Activated B cell treated with CpG ODN at 0.5 μM for 24 hours (primary cell): ENCODE measurements at regions of chr16 and their contacts with region 1.

Region 1: DNA sequence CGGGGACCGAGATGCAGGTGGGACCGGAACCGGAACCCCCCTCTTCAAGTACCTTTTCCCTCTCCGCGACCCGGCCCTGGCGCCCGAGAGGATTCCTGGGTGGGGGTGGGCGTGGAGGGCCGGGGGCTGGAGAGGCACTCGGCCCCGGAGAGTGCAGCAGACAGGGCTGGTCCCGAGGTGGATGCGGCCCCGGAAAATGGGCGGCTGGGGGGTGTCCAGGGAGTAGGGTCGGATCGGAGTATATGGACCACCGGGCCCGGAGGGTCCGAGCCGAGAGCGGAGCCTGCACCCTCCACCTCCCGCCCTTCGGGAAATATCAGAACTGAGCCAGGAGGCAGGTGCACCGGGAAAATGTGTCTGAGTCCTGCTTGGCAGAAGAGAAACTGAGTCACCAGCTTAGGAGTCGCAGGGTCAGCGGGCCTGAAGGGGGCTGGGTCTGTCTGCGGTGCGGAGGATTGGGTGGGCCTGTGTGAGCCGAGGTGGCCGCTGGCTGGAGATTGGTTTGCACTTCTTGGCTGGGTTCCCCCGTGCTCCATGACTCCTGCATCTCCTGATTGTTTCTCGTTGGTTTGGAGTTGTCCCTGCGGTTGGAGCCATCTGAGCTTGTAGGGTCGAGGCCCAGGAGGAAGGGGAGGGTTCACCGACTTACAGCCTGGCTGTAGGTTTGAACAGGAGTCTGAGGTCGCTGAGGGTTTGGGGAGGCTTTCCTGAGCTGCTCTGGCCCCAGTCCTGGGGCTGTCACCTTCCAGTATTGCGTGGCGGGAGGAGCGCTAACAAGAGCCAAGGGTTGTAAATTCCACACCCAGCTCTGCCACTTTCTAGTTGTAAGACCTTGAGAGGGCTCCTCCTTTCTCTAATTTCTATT is 518 bp downstream of the SH2B1 start:
- DNase-seq: no peak
- ATAC-seq: no peak
- H3K4me3 Mint-ChIP-seq: peak overlapping the region; percentile 98
- H3K27ac Mint-ChIP-seq: peak overlapping the region; percentile 98
- H3K4me1 Mint-ChIP-seq: peaks cover 24% of the 10 kb centered on the region
- H3K27me3 Mint-ChIP-seq: no peaks in the 10 kb centered on the region
- CTCF ChIP-seq: no peak

Region 2: GRCh38 chr16:28846080-28846932 is 17.9 kb before region 1 on chr16 and contains the start of gene TUFM:
- CTCF ChIA-PET with region 1: interaction called, 9 read pairs
- POLR2A ChIA-PET with region 1: interaction called, 113 read pairs
- intact Hi-C with region 1: loop called (anchors 1 kb)
- DNase-seq: peak; percentile 96
- ATAC-seq: peak; percentile 97
- H3K4me3 Mint-ChIP-seq: peak within 1 kb of the TSS; percentile 95
- H3K27ac Mint-ChIP-seq: peak within 1 kb of the TSS; percentile 90
- H3K4me1 Mint-ChIP-seq: peaks cover 28% of the 10 kb centered on the region
- H3K27me3 Mint-ChIP-seq: no peaks in the 10 kb centered on the region
- CTCF ChIP-seq: no peak
- total RNA-seq, gene TUFM: 189 and 206 TPM in 2 replicates

Region 3: DNA sequence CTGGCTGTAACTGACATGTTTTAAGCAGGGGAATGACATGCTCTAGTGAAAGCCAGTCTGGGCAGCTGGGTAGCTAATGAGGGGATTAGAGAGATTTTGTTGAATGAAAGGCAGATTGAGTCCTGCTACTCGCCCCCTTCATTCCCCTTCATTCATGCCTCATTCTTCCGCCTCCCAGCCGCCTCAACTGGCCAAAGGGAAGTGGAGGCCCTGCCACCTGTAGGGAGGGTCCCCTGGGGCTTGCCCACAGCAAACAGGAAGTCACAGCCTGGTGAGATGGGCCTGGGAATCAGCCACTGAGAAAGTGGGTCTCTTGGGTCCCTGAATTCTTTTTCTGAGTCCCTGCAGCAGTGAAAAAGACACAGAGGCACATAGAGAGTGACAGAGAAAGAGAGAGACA is 66.5 kb after region 1 on chr16:
- CTCF ChIA-PET with region 1: no interaction called
- POLR2A ChIA-PET with region 1: interaction called, 21 read pairs
- intact Hi-C with region 1: no loop called
- DNase-seq: peak; percentile 60
- ATAC-seq: peak; percentile 76
- H3K4me3 Mint-ChIP-seq: peak overlapping the region; percentile 99
- H3K27ac Mint-ChIP-seq: peak overlapping the region; percentile 98
- H3K4me1 Mint-ChIP-seq: peaks cover 75% of the 10 kb centered on the region
- H3K27me3 Mint-ChIP-seq: no peaks in the 10 kb centered on the region
- CTCF ChIP-seq: no peak

Region 4: DNA sequence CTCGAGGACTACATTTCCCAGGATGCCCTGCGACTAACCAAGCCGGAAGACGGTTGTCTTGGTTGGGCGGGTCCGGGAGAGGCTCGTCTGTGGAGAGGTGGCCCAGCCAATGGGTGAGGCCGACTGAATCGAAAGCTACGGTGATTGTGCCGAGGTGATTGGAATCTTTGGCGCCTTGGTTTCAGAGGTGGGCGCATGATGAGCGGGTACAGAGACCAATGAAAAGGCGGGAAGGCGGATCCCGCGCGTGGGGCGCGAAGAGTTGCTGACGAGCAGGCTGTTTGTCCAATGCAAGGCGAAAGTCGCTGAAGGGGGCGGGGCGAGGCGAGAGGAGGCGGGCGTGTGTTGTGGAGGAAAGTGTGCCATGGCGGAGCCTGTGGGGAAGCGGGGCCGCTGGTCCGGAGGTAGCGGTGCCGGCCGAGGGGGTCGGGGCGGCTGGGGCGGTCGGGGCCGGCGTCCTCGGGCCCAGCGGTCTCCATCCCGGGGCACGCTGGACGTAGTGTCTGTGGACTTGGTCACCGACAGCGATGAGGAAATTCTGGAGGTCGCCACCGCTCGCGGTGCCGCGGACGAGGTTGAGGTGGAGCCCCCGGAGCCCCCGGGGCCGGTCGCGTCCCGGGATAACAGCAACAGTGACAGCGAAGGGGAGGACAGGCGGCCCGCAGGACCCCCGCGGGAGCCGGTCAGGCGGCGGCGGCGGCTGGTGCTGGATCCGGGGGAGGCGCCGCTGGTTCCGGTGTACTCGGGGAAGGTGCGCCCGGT is 86.7 kb after region 1 on chr16 and contains the start of gene NFATC2IP:
- CTCF ChIA-PET with region 1: interaction called, 25 read pairs
- POLR2A ChIA-PET with region 1: interaction called, 18 read pairs
- intact Hi-C with region 1: loop called (anchors 1 kb)
- DNase-seq: peak; percentile 98
- ATAC-seq: peak; percentile 95
- H3K4me3 Mint-ChIP-seq: peak within 1 kb of the TSS; percentile 91
- H3K27ac Mint-ChIP-seq: peak within 1 kb of the TSS; percentile 81
- H3K4me1 Mint-ChIP-seq: peaks cover 25% of the 10 kb centered on the region
- H3K27me3 Mint-ChIP-seq: no peaks in the 10 kb centered on the region
- CTCF ChIP-seq: no peak
- total RNA-seq, gene NFATC2IP: 62.9 and 85.7 TPM in 2 replicates

Region 5: GRCh38 chr16:29007730-29008593 is 143.8 kb after region 1 on chr16:
- CTCF ChIA-PET with region 1: no interaction called
- POLR2A ChIA-PET with region 1: no interaction called
- intact Hi-C with region 1: no loop called
- DNase-seq: no peak
- ATAC-seq: no peak
- H3K4me3 Mint-ChIP-seq: no peak overlapping the region
- H3K27ac Mint-ChIP-seq: no peak overlapping the region
- H3K4me1 Mint-ChIP-seq: peaks cover 2% of the 10 kb centered on the region
- H3K27me3 Mint-ChIP-seq: peaks cover 12% of the 10 kb centered on the region
- CTCF ChIP-seq: no peak